ENCODE measurements at regions of chr19 and their contacts with region 1.

Region 1: GRCh38 chr19:44002566-44003460 is at the start of gene ZNF230:
- H3K4me3 Mint-ChIP-seq: peak within 1 kb of the TSS; percentile 97
- H3K27ac Mint-ChIP-seq: peak within 1 kb of the TSS; percentile 94
- H3K4me1 Mint-ChIP-seq: peaks cover 31% of the 10 kb centered on the region
- H3K27me3 Mint-ChIP-seq: peaks cover 2% of the 10 kb centered on the region

Region 2: GRCh38 chr19:43950834-43951645 is 51.8 kb before region 1 on chr19 and contains the start of gene ZNF221:
- intact Hi-C with region 1: loop called (anchors 2 kb)
- H3K4me3 Mint-ChIP-seq: peak within 1 kb of the TSS; percentile 99
- H3K27ac Mint-ChIP-seq: peak within 1 kb of the TSS; percentile 92
- H3K4me1 Mint-ChIP-seq: peaks cover 8% of the 10 kb centered on the region
- H3K27me3 Mint-ChIP-seq: peaks cover 13% of the 10 kb centered on the region

Region 3: DNA sequence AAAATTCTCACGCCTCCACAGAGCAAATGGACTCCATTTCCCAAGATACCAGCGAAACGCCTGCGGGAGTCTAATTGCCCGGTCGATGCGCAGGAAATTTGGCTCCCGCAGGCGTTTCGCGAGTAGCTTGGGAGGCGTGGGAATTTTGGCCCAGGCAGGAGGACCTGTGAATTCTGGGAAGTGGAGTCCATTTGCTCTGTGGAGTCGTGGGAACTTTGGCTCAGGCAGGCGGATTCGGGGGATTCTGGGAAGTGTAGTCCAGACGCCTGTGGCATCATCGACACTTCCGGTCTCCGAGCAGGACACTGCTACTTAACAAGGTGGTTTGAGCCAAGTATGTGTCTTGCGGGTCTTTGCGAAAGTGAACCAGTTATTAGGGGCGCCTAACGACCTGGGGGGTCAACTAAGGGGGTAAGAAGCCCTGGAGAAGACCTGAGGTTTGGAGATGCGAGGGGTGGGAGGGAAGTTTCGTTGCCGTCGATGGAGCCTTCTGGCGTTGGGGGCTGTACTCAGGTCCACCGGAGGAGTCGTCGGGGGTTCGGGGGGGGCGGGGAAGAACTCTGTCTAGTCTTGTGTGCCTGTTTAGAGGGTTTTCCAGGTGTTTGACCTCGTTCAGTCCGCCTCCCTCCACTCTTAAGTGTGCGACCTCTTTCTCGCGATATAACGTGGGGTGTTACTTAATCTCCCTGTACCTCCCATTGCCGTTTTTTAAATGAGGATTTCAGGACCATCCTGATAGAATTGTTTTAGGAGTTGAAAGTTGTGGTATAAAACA is 18.7 kb before region 1 on chr19 and contains the start of gene ZNF155:
- intact Hi-C with region 1: loop called (anchors 1 kb)
- H3K4me3 Mint-ChIP-seq: peak within 1 kb of the TSS; percentile 90
- H3K27ac Mint-ChIP-seq: peak within 1 kb of the TSS; percentile 88
- H3K4me1 Mint-ChIP-seq: peaks cover 5% of the 10 kb centered on the region
- H3K27me3 Mint-ChIP-seq: no peaks in the 10 kb centered on the region

Region 4: GRCh38 chr19:44025217-44025936 is 22.6 kb after region 1 on chr19 and contains the start of gene ZNF222:
- intact Hi-C with region 1: loop called (anchors 1 kb)
- H3K4me3 Mint-ChIP-seq: peak within 1 kb of the TSS; percentile 99
- H3K27ac Mint-ChIP-seq: peak within 1 kb of the TSS; percentile 96
- H3K4me1 Mint-ChIP-seq: peaks cover 20% of the 10 kb centered on the region
- H3K27me3 Mint-ChIP-seq: peaks cover 2% of the 10 kb centered on the region

Region 5: GRCh38 chr19:44071824-44072542 is 69.2 kb after region 1 on chr19 and contains the start of gene ZNF284:
- intact Hi-C with region 1: no loop called
- H3K4me3 Mint-ChIP-seq: peak within 1 kb of the TSS; percentile 90
- H3K27ac Mint-ChIP-seq: peak within 1 kb of the TSS; percentile 84
- H3K4me1 Mint-ChIP-seq: peaks cover 21% of the 10 kb centered on the region
- H3K27me3 Mint-ChIP-seq: peaks cover 6% of the 10 kb centered on the region

Region 6: DNA sequence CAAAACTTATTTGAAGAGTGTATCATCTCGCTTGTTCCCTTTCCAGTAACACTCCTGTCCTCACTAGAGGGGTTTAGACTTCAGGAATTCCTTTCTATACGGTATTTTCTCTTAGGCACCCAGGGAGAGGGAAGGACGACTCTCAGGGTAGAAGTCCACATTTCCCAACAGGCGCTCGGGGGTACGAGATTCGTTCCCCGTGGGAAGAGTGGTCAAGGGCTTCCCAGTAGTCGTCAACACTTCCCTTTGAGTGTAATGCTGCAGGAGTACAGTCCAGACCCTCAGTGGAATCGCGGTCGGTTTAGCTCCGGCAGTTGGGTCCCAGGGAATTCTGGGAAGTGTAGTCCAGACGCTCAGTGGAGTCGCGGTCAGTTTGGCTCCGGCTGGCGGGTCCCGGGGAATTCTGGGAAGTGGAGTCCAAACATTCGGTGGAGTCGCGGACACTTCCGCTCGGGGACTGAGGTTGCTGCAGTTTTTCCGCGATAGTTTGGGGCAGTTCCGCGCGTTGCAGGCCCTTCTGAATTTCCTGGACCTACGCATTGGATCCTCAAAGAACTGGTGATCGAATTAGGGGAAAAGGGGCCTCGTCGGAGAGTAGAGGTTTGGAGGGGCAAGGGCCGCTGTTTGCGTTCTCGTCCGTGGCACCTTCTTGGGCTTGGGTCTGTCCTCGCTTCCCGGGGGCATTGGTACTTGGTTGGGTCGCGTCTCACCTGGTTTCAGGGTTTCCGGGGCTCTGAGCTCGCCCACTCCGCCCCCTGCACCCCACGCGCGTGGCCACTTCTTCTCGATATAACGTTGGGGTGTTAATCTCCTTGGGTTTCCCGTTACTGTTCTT is 91.3 kb after region 1 on chr19 and contains the start of gene ZNF224:
- intact Hi-C with region 1: loop called (anchors 5 kb)
- H3K4me3 Mint-ChIP-seq: peak within 1 kb of the TSS; percentile 95
- H3K27ac Mint-ChIP-seq: peak within 1 kb of the TSS; percentile 93
- H3K4me1 Mint-ChIP-seq: peaks cover 7% of the 10 kb centered on the region
- H3K27me3 Mint-ChIP-seq: peaks cover 3% of the 10 kb centered on the region

Region 7: GRCh38 chr19:44212250-44212865 is 209.5 kb after region 1 on chr19 and contains the start of gene ZNF227:
- intact Hi-C with region 1: loop called (anchors 5 kb)
- H3K4me3 Mint-ChIP-seq: peak within 1 kb of the TSS; percentile 93
- H3K27ac Mint-ChIP-seq: peak within 1 kb of the TSS; percentile 91
- H3K4me1 Mint-ChIP-seq: peaks cover 16% of the 10 kb centered on the region
- H3K27me3 Mint-ChIP-seq: no peaks in the 10 kb centered on the region

Region 8: DNA sequence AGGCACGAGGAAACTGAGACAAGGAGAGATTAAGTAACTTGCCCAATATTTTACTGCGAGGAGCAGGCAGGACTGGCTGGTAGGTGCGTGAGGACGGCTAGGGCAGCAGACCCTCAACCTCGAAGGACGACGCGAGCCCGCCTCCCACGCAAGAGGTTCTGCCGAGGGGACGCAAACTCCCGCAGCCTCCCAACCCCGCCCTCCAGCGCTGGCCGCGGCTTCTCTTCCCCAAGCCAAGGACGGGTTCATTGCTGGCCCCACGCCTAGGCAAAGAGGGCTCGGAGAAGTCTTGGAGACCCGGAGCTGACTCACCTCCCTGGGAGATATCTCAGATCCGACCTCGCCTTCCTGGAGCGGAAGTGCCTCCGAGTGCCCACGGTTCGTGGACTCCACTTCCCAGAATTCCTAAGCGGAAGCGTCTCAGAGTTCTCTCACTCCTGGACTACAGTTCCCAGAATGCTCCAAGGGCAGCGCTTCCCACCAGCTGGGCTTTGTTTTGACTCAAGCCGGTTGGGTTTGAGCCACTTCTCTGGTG is 301.9 kb after region 1 on chr19 and contains the start of gene ZNF235:
- intact Hi-C with region 1: loop called (anchors 2 kb)
- H3K4me3 Mint-ChIP-seq: peak within 1 kb of the TSS; percentile 83
- H3K27ac Mint-ChIP-seq: peak within 1 kb of the TSS; percentile 81
- H3K4me1 Mint-ChIP-seq: peaks cover 11% of the 10 kb centered on the region
- H3K27me3 Mint-ChIP-seq: peaks cover 3% of the 10 kb centered on the region